HCT116 (cell line): ENCODE measurements at regions of chr11 and their contacts with region 1.

Region 1: DNA sequence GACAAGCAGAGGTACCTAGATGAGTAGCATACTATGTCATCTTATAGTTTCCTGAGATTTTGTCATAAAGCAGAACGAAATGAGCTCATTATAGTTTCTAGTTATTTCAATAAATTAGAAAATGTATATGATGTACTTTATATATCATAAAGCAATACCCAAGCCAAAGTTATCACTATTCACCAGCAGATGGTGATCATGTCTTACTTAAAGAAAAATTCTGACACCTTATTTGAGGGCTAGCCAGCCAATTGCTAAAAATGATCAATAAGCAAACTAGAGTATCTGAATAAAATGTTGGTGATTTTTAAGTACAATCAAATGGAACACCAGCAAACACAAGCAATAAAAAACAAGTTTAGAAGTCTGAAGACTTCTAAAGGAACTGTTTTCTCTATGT is 44.1 kb downstream of the RSF1 start:
- DNase-seq: peak; percentile 19
- ATAC-seq: no peak
- H3K4me3 ChIP-seq: no peak overlapping the region
- H3K27ac ChIP-seq: no peak overlapping the region
- H3K4me1 ChIP-seq: no peaks in the 10 kb centered on the region
- H3K27me3 ChIP-seq: no peaks in the 10 kb centered on the region
- CTCF ChIP-seq: peak; percentile 32 to 47 (median 34); a peak in 4 of 6 replicates
- POLR2A ChIP-seq: no peak
- RAD21 ChIP-seq: peak; percentile 62

Region 2: DNA sequence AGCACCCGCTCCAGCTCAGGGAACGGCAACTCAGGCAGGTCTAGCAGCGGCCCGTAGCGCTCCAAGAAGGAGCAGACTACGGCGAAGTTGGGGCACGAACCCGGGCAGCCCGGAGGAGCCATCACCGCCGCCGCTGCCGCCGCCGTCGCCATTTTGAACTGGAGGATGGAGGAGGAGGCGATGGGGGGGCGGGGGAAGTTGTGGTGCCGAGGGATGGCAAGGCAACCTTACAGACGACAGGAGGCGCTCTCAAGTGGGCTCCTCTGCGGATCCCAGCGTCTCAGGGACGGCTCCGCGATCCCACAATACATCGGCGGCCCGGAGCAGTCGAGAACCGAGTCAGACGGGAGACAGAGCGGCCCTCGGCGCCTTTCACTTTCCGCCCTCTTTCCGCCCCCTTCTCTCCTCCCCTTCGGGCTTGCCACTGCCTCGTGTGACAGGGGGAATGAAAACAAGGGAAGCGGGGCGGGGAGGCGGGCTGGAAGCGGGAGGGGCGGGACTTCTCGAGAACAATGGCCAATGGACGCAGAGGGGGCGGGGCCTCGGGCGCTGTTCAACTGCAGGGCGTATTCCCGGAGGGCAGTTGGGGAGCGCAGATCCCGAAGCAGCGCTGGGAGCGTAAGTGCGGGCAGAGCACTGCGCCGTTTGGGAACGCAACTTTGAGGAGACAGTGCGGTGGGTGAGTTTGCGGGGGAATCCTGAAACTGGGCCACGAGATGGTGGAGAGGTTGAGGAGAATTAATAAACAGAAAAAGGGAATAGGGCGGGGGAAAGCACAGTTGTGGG is 44.3 kb after region 1 on chr11 and contains the starts of genes AAMDC and RSF1:
- CTCF ChIA-PET with region 1: no interaction called
- POLR2A ChIA-PET with region 1: no interaction called
- RAD21 ChIA-PET with region 1: no interaction called
- intact Hi-C with region 1: loop called (anchors 5 kb)
- DNase-seq: peak; percentile 96
- ATAC-seq: peak; percentile 85
- H3K4me3 ChIP-seq: peak within 1 kb of the TSS; percentile 78 to 91
- H3K27ac ChIP-seq: peak within 1 kb of the TSS; percentile 90
- H3K4me1 ChIP-seq: peaks cover 5 to 13% of the 10 kb centered on the region in 2 experiments; a peak in 3 of 4 replicates
- H3K27me3 ChIP-seq: no peaks in the 10 kb centered on the region
- CTCF ChIP-seq: peak; percentile 47 to 75 (median 61); a peak in 5 of 6 replicates
- POLR2A ChIP-seq: peak; percentile 74
- RAD21 ChIP-seq: peak; percentile 59
- total RNA-seq, gene AAMDC: 11.2 TPM
- total RNA-seq, gene RSF1: 43.1 TPM

Region 3: DNA sequence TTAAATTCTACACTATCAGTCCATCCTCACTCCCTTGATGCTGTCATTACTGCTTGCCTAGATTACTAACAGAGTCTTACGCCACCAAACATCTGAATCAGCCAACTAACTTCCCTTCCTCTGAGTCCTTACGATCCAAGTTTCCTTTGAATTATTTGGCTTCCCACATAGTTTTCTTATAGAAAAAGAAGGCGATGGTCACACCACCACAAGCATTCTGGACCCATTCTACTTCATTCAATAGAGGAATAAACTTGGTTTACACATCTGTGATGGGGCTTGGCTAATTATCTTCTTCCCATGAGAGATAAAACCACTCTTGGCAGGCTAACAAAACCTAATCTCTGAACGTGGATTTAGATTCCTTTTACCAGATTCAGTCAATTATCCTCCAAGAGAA is 183.0 kb after region 1 on chr11:
- CTCF ChIA-PET with region 1: no interaction called
- POLR2A ChIA-PET with region 1: no interaction called
- RAD21 ChIA-PET with region 1: no interaction called
- intact Hi-C with region 1: no loop called
- DNase-seq: no peak
- ATAC-seq: no peak
- H3K4me3 ChIP-seq: no peak overlapping the region
- H3K27ac ChIP-seq: no peak overlapping the region
- H3K4me1 ChIP-seq: no peaks in the 10 kb centered on the region
- H3K27me3 ChIP-seq: no peaks in the 10 kb centered on the region
- CTCF ChIP-seq: no peak
- POLR2A ChIP-seq: no peak
- RAD21 ChIP-seq: no peak

Region 4: DNA sequence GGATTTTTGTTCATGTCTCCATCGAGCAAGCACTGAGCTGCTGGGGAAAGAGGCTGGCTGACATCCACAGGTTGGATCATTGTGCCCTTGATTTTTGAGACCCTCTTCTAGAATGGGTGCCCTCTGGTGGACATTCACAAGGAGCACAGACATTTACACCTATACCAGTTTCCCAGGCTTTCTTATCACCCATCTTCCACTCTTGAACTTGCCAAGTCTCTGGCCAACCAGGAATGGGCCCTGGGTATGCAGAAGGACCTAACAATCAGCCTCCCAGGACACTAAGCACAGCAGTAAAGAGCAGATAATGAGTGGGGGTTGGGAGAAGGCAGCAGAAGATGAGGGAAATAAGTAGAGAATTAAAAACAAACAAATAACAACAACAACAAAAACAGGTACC is 223.7 kb after region 1 on chr11:
- CTCF ChIA-PET with region 1: interaction called, 10 read pairs
- POLR2A ChIA-PET with region 1: interaction called, 3 read pairs
- RAD21 ChIA-PET with region 1: no interaction called
- intact Hi-C with region 1: loop called (anchors 1 kb)
- DNase-seq: peak; percentile 68
- ATAC-seq: peak; percentile 95
- H3K4me3 ChIP-seq: no peak overlapping the region
- H3K27ac ChIP-seq: no peak overlapping the region
- H3K4me1 ChIP-seq: peaks cover 7 to 8% of the 10 kb centered on the region in 2 experiments
- H3K27me3 ChIP-seq: no peaks in the 10 kb centered on the region
- CTCF ChIP-seq: peak; percentile 58 to 76 (median 71); a peak in 5 of 6 replicates
- POLR2A ChIP-seq: no peak
- RAD21 ChIP-seq: peak; percentile 67